K562 (cell line): ENCODE measurements at regions of chr11 and their contacts with region 1.

Region 1: GRCh38 chr11:22634897-22635629 is 9.4 kb upstream of the FANCF start:
- DNase-seq: peak in 1 of 4 experiments; percentile 9
- ATAC-seq: peak; percentile 40
- H3K4me3 ChIP-seq: no peak overlapping the region
- H3K27ac ChIP-seq: no peak overlapping the region
- H3K4me1 ChIP-seq: no peaks in the 10 kb centered on the region
- H3K27me3 ChIP-seq: no peaks in the 10 kb centered on the region
- CTCF ChIP-seq: no peak
- EP300 ChIP-seq: no peak
- POLR2A ChIP-seq: no peak
- RAD21 ChIP-seq: no peak

Region 2: GRCh38 chr11:22657101-22657694 is 22.1 kb after region 1 on chr11:
- CTCF ChIA-PET with region 1: no interaction called
- POLR2A ChIA-PET with region 1: no interaction called
- in situ Hi-C with region 1: no loop called
- intact Hi-C with region 1: loop called (anchors 1 kb)
- DNase-seq: no peak
- ATAC-seq: no peak; the same call in 2 of the 3 replicates
- H3K4me3 ChIP-seq: no peak overlapping the region
- H3K27ac ChIP-seq: no peak overlapping the region
- H3K4me1 ChIP-seq: no peaks in the 10 kb centered on the region
- H3K27me3 ChIP-seq: no peaks in the 10 kb centered on the region
- CTCF ChIP-seq: no peak
- EP300 ChIP-seq: no peak
- POLR2A ChIP-seq: no peak
- RAD21 ChIP-seq: no peak